Dendritic cell treated with granulocyte-macrophage colony-stimulating factor and Interleukin-4, amounts not matched to agents 40 ng/mL and 50 ng/mL, for 4 days (primary cell): ENCODE measurements at regions of chr4 and their contacts with region 1.

Region 1: DNA sequence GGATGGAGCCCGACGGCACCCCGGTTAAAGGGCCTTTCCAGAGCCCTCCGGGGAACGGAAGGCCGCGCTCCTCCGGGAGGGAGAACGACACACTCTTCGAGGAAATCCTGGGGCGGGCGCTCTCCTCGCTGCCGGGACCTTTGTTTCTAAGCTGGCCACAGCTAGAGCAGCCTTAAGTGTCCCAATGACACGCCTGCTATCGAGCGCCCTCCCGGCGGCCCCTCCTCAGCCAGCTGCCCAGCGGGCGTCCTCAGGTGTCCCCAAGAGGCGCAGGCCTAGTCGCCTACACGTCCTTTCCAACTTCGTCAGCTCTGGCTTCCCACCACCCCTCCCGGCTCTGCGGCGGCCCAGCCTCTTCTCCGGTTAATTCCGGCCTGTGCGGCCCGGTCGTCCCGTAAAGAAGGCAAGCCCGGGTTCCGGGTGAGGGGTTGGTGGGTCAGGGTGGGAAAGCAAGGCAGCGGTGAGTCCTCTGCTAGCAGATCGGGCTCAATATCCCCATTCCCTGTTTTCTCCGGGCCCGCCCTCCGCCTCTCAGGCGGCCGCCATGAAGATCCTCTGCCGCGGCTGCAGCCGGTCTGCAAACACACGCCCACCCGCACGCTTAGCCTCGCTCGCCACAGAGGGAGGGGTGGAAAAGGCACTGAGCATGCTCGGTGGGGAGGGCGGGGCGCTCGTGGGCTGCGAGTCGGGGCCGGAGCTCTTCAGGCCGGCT is 449 bp upstream of the RAP1GDS1 start:
- H3K4me3 Mint-ChIP-seq: peak overlapping the region; percentile 88
- H3K27ac Mint-ChIP-seq: peak overlapping the region; percentile 98
- H3K4me1 Mint-ChIP-seq: peaks cover 52% of the 10 kb centered on the region
- H3K27me3 Mint-ChIP-seq: no peaks in the 10 kb centered on the region

Region 2: DNA sequence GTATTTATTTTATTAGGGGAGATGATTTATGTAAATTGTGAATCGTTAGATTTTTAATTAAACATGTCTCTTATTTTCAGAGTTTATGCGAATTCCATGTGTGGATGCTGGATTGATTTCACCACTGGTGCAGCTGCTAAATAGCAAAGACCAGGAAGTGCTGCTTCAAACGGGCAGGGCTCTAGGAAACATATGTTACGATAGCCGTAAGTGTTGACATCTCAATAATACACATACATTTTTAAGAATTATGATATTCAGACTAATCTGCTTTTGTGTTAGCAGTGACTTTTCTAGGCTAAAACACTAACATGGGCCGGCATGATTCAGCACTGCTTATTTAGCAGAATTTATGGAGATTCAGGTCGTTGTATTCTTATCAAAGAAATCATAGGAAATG is 91.7 kb after region 1 on chr4:
- intact Hi-C with region 1: loop called (anchors 10 kb)
- H3K4me3 Mint-ChIP-seq: no peak overlapping the region
- H3K27ac Mint-ChIP-seq: peak overlapping the region; percentile 25
- H3K4me1 Mint-ChIP-seq: no peaks in the 10 kb centered on the region
- H3K27me3 Mint-ChIP-seq: no peaks in the 10 kb centered on the region

Region 3: GRCh38 chr4:98928505-98929340 is 668.0 kb after region 1 on chr4 and contains the start of gene EIF4E:
- intact Hi-C with region 1: loop called (anchors 2 kb)
- H3K4me3 Mint-ChIP-seq: peak within 1 kb of the TSS; percentile 92
- H3K27ac Mint-ChIP-seq: peak within 1 kb of the TSS; percentile 93
- H3K4me1 Mint-ChIP-seq: peaks cover 31% of the 10 kb centered on the region
- H3K27me3 Mint-ChIP-seq: no peaks in the 10 kb centered on the region

Region 4: DNA sequence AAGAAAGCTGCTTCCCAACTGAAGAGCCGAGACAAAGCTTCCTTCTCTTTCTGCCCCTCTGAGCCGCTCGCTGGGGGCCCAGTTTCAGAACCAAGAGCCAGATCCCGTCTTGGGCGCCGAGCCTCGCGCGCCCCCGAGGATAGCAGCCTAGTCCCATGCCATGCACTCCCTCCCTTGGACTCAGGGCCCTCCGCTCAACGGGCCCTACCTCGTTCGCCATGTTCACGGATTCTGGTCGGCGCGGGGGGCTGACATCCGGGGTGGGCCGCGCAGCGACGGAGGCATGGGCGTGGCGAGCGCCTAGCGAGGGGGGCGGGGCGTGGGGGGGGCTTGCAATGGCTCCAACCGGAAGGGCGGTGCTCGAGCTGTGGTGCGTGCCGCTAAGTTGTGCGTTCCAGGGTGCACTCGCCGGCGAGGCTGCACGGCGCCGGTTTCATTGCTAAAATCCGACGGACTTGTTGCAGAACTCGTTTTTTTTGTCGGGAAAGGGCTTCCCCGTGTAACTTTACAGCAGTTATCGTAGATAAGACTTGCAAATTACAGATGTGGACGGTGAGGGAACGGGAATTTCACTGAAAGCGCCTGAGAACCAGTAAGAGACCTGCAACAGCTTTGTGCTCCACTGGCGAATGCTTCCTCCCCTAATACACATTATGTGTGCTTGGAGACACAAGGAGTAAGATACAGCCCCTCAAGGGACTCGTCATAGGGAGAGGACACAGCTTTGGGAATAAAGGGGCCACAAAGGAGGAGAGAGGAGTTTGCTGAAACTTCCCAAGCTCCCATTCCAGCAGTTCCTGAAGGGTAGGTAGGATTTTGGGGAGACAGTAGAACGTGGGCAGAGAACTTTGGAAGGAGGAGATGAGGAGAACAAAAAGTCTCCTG is 828.0 kb after region 1 on chr4 and contains the start of gene ADH5:
- intact Hi-C with region 1: loop called (anchors 2 kb)
- H3K4me3 Mint-ChIP-seq: peak within 1 kb of the TSS; percentile 89
- H3K27ac Mint-ChIP-seq: peak within 1 kb of the TSS; percentile 93
- H3K4me1 Mint-ChIP-seq: peaks cover 47% of the 10 kb centered on the region
- H3K27me3 Mint-ChIP-seq: peaks cover 2% of the 10 kb centered on the region

Region 5: GRCh38 chr4:99949034-99949998 is 1688.6 kb after region 1 on chr4:
- intact Hi-C with region 1: loop called (anchors 10 kb)
- H3K4me3 Mint-ChIP-seq: no peak overlapping the region
- H3K27ac Mint-ChIP-seq: no peak overlapping the region
- H3K4me1 Mint-ChIP-seq: peaks cover 30% of the 10 kb centered on the region
- H3K27me3 Mint-ChIP-seq: no peaks in the 10 kb centered on the region